Panc1 (cell line): ENCODE measurements at regions of chrX and their contacts with region 1.

Region 1: GRCh38 chrX:49163555-49164419 is 1.2 kb downstream of the MAGIX start:
- DNase-seq: no peak
- ATAC-seq: peak; percentile 77
- H3K4me3 ChIP-seq: peak overlapping the region; percentile 40 to 57
- H3K27ac ChIP-seq: peak overlapping the region; percentile 93
- H3K4me1 ChIP-seq: peaks cover 28% of the 10 kb centered on the region
- H3K27me3 ChIP-seq: no peaks in the 10 kb centered on the region
- CTCF ChIP-seq: peak; percentile 91

Region 2: GRCh38 chrX:49120099-49120498 is 43.7 kb before region 1 on chrX:
- CTCF ChIA-PET with region 1: no interaction called
- POLR2A ChIA-PET with region 1: no interaction called
- in situ Hi-C with region 1: no loop called
- intact Hi-C with region 1: loop called (anchors 5 kb)
- DNase-seq: no peak
- ATAC-seq: no peak
- H3K4me3 ChIP-seq: no peak overlapping the region
- H3K27ac ChIP-seq: no peak overlapping the region
- H3K4me1 ChIP-seq: peaks cover 3% of the 10 kb centered on the region; the same call in 1 of the 2 replicates
- H3K27me3 ChIP-seq: no peaks in the 10 kb centered on the region
- CTCF ChIP-seq: no peak; the same call in 1 of the 2 replicates

Region 3: GRCh38 chrX:49133759-49134158 is 30.0 kb before region 1 on chrX:
- CTCF ChIA-PET with region 1: no interaction called
- POLR2A ChIA-PET with region 1: no interaction called
- in situ Hi-C with region 1: no loop called
- intact Hi-C with region 1: no loop called
- DNase-seq: no peak
- ATAC-seq: no peak
- H3K4me3 ChIP-seq: no peak overlapping the region
- H3K27ac ChIP-seq: no peak overlapping the region
- H3K4me1 ChIP-seq: no peaks in the 10 kb centered on the region
- H3K27me3 ChIP-seq: no peaks in the 10 kb centered on the region
- CTCF ChIP-seq: no peak